ENCODE measurements at regions of chr6 and their contacts with region 1.

Region 1: DNA sequence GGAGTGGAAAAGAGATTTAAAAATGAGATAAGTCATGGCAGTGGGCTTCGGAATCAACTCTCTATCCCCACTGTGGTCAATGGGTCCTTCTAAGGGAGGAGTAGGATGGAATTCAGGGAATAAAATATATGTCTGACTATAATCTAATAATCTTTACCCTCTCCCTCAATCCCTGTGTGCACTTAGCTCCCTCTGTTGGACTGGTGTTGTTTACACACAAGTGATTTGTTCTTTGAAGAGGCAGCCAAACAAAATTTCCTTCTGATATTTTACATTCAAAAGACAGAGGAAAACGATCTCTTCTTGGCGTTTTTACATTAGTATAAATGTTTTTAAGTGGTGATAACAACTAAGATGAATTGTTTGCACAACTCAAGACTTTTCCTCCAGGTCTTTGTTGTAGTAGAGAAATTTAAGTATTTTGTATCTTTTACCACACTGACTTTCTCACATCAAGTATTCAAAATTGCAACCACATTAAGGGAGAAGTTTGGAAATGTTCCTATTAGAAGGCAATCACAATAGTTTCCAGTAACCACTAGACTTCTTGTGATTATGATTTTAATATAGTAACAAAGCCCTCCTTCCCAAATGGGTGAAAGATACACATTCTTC is 317.8 kb downstream of the CENPW start:
- ATAC-seq: peak in 3 of 8 experiments; percentile 49 to 61 (median 52)
- H3K4me3 ChIP-seq: no peak overlapping the region
- H3K27ac ChIP-seq: no peak overlapping the region
- H3K4me1 ChIP-seq: no peaks in the 10 kb centered on the region

Region 2: GRCh38 chr6:126361832-126362412 is 295.7 kb before region 1 on chr6:
- in situ Hi-C with region 1: loop called in 2 of 9 experiments (anchors 10 to 25 kb)
- ATAC-seq: peak in 3 of 8 experiments; percentile 59 to 85 (median 79)
- H3K4me3 ChIP-seq: no peak overlapping the region
- H3K27ac ChIP-seq: no peak overlapping the region
- H3K4me1 ChIP-seq: no peaks in the 10 kb centered on the region

Region 3: DNA sequence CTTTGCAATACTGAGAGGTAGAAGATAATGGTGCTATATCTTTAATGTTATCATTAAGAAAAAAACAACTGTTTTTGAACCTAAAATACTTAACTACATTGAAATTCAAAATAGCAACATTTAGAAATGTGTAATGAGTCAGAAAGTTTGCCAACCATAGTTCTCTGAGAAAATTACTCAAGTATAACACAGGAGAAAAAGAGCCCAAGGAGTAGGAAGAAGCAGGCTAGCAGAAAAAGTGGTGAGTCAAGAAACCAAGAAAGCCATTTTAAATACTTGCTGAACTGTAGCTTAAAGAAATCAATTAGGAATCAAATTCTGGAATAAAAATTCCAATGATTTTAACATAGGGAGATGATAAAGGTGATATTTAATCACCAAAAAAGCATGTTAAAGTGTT is 279.8 kb after region 1 on chr6:
- in situ Hi-C with region 1: no loop called
- ATAC-seq: no peak
- H3K4me3 ChIP-seq: no peak overlapping the region
- H3K27ac ChIP-seq: no peak overlapping the region
- H3K4me1 ChIP-seq: no peaks in the 10 kb centered on the region

Measured in motor neuron (in vitro differentiated cells).